Adrenal gland (tissue), 19 donors: ENCODE measurements at regions of chr7 and their contacts with region 1.

Region 1: GRCh38 chr7:143214789-143215679 is 6.8 kb upstream of the TAS2R40 start:
- DNase-seq: peak; percentile 49 to 82 (median 68)
- H3K4me3 ChIP-seq: no peak overlapping the region
- H3K27ac ChIP-seq: no peak overlapping the region
- H3K4me1 ChIP-seq: no peaks in the 10 kb centered on the region
- H3K27me3 ChIP-seq: no peaks in the 10 kb centered on the region
- CTCF ChIP-seq: peak; percentile 98 to 100 (median 100)
- POLR2A ChIP-seq: no peak

Region 2: DNA sequence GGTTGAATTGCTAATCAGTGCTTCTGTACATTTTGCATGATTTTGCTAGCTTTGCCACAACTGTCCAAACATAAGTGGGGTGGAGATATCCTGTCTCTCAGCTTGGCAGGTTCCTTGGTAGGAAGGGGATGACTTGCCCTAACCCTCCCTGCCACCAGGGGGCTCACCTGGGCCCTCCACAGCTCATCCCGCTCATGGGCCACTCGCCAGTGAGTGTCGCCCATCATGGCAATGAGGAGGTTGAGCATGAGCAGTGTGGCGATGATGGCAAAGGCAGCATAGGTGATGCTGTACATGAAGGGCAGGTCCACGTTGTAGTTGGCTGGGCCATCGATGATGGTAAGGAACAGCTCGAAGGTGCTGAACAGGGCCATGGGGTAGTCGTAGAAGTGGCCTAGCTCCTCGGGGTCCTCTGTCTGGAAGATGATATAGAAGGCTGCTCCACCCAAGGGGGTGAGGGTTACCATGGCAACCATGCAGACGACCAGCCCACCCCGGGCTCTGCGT is 341.7 kb before region 1 on chr7:
- intact Hi-C with region 1: loop called in 1 of 2 experiments (anchors 10 kb)
- DNase-seq: no peak
- H3K4me3 ChIP-seq: no peak overlapping the region
- H3K27ac ChIP-seq: no peak overlapping the region
- H3K4me1 ChIP-seq: no peaks in the 10 kb centered on the region
- H3K27me3 ChIP-seq: no peaks in the 10 kb centered on the region
- CTCF ChIP-seq: peak in 2 of 6 experiments; percentile 23 to 39
- POLR2A ChIP-seq: no peak